ENCODE measurements at regions of chr1 and their contacts with region 1.

Region 1: GRCh38 chr1:189790335-189790734 is 687.3 kb downstream of the BRINP3 start:
- DNase-seq: no peak
- ATAC-seq: no peak
- H3K4me3 ChIP-seq: no peak overlapping the region
- H3K4me3 Mint-ChIP-seq: no peak overlapping the region
- H3K27ac ChIP-seq: no peak overlapping the region
- H3K27ac Mint-ChIP-seq: no peak overlapping the region
- H3K4me1 ChIP-seq: no peaks in the 10 kb centered on the region
- H3K4me1 Mint-ChIP-seq: no peaks in the 10 kb centered on the region
- H3K27me3 ChIP-seq: no peaks in the 10 kb centered on the region
- H3K27me3 Mint-ChIP-seq: no peaks in the 10 kb centered on the region
- CTCF ChIP-seq: no peak

Region 2: DNA sequence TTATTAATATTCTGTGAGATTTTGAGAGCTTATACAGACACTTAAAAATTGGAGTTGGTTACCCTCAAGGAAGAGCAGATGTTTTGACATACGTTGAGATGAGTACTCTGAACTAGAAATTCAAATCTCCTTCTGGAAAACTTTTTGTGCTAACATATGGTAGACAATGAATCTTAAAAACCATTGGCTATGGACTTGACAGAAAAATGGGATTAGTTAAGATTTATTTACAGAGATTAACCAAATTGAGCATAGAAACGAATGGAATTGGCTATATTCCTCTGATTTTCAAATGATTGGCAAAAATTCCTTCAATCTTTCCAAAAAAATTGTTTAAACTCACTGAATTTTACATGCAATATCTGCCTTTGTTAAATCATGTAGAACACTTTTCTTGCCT is 705.5 kb before region 1 on chr1:
- CTCF ChIA-PET with region 1: no interaction called
- POLR2A ChIA-PET with region 1: no interaction called
- intact Hi-C with region 1: loop called in 1 of 2 experiments (anchors 10 kb)
- DNase-seq: no peak
- ATAC-seq: no peak
- H3K4me3 ChIP-seq: no peak overlapping the region
- H3K4me3 Mint-ChIP-seq: no peak overlapping the region
- H3K27ac ChIP-seq: no peak overlapping the region
- H3K27ac Mint-ChIP-seq: no peak overlapping the region
- H3K4me1 ChIP-seq: no peaks in the 10 kb centered on the region
- H3K4me1 Mint-ChIP-seq: no peaks in the 10 kb centered on the region
- H3K27me3 ChIP-seq: no peaks in the 10 kb centered on the region
- H3K27me3 Mint-ChIP-seq: no peaks in the 10 kb centered on the region
- CTCF ChIP-seq: no peak

Region 3: GRCh38 chr1:189463166-189463565 is 327.2 kb before region 1 on chr1:
- CTCF ChIA-PET with region 1: no interaction called
- POLR2A ChIA-PET with region 1: no interaction called
- intact Hi-C with region 1: no loop called
- DNase-seq: no peak
- ATAC-seq: no peak
- H3K4me3 ChIP-seq: no peak overlapping the region
- H3K4me3 Mint-ChIP-seq: no peak overlapping the region
- H3K27ac ChIP-seq: no peak overlapping the region
- H3K27ac Mint-ChIP-seq: no peak overlapping the region
- H3K4me1 ChIP-seq: no peaks in the 10 kb centered on the region
- H3K4me1 Mint-ChIP-seq: no peaks in the 10 kb centered on the region
- H3K27me3 ChIP-seq: no peaks in the 10 kb centered on the region
- H3K27me3 Mint-ChIP-seq: no peaks in the 10 kb centered on the region
- CTCF ChIP-seq: no peak

Region 4: DNA sequence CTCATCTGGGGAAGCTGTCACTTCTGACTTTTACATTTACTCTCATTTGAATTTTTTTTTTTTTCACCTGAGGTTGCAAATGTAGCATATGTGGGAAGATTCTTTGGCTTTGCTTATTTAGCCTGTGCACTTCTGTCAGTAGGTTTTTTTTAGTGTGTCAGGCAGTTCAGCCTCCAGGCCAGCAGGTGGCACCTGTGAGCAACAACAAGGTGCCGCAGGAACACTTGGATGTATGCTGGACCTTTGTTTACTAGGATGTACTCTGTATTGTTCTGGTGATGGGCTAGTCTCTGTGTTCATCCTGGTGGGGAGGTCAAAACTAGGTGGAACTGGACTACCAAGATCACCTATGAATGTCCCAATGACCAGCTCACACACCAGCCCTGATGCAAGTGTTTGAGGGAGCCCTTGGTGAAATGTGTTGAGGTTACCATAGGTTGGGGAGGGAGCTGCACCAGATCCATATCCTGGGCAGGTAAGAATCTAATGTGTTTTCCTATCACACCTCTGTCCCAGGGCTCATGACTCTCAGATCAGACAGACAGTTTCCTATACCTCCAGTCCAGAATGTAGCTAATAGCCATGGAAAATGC is 69.1 kb after region 1 on chr1:
- CTCF ChIA-PET with region 1: no interaction called
- POLR2A ChIA-PET with region 1: no interaction called
- intact Hi-C with region 1: loop called in 1 of 2 experiments (anchors 10 kb)
- DNase-seq: peak in 2 of 14 experiments; percentile 5 to 8
- ATAC-seq: no peak
- H3K4me3 ChIP-seq: no peak overlapping the region
- H3K4me3 Mint-ChIP-seq: no peak overlapping the region
- H3K27ac ChIP-seq: no peak overlapping the region
- H3K27ac Mint-ChIP-seq: no peak overlapping the region
- H3K4me1 ChIP-seq: no peaks in the 10 kb centered on the region
- H3K4me1 Mint-ChIP-seq: no peaks in the 10 kb centered on the region
- H3K27me3 ChIP-seq: no peaks in the 10 kb centered on the region
- H3K27me3 Mint-ChIP-seq: no peaks in the 10 kb centered on the region
- CTCF ChIP-seq: no peak